ENCODE measurements at regions of chrX and their contacts with region 1.

Region 1: GRCh38 chrX:106611679-106612392 is at the start of gene RADX:
- DNase-seq: peak; percentile 58
- ATAC-seq: peak; percentile 99
- H3K4me3 ChIP-seq: peak within 1 kb of the TSS; percentile 60 to 73 (median 72)
- H3K27ac ChIP-seq: no peak within 1 kb of the TSS
- H3K4me1 ChIP-seq: peaks cover 10% of the 10 kb centered on the region
- H3K27me3 ChIP-seq: no peaks in the 10 kb centered on the region
- CTCF ChIP-seq: no peak
- EP300 ChIP-seq: no peak
- POLR2A ChIP-seq: 0 out of 4 replicates have a peak, but pooled peaks of 1 of the 2 experiments have one; percentile 23
- RAD21 ChIP-seq: no peak
- total RNA-seq, gene RADX: 2.6 and 2.7 TPM in 2 replicates

Region 2: GRCh38 chrX:106588801-106589200 is 23.0 kb before region 1 on chrX:
- CTCF ChIA-PET with region 1: no interaction called
- POLR2A ChIA-PET with region 1: no interaction called
- in situ Hi-C with region 1: no loop called
- intact Hi-C with region 1: no loop called
- DNase-seq: no peak
- ATAC-seq: no peak
- H3K4me3 ChIP-seq: no peak overlapping the region
- H3K27ac ChIP-seq: no peak overlapping the region
- H3K4me1 ChIP-seq: no peaks in the 10 kb centered on the region
- H3K27me3 ChIP-seq: no peaks in the 10 kb centered on the region
- CTCF ChIP-seq: no peak
- EP300 ChIP-seq: no peak
- POLR2A ChIP-seq: no peak
- RAD21 ChIP-seq: no peak

Region 3: GRCh38 chrX:106649523-106650428 is 37.9 kb after region 1 on chrX:
- CTCF ChIA-PET with region 1: no interaction called
- POLR2A ChIA-PET with region 1: no interaction called
- in situ Hi-C with region 1: no loop called
- intact Hi-C with region 1: no loop called
- DNase-seq: no peak
- ATAC-seq: no peak
- H3K4me3 ChIP-seq: no peak overlapping the region
- H3K27ac ChIP-seq: no peak overlapping the region
- H3K4me1 ChIP-seq: 0 out of 2 replicates have a peak, but pooled peaks cover 11% of the 10 kb centered on the region
- H3K27me3 ChIP-seq: no peaks in the 10 kb centered on the region
- CTCF ChIP-seq: no peak
- EP300 ChIP-seq: no peak
- POLR2A ChIP-seq: no peak
- RAD21 ChIP-seq: no peak

Region 4: DNA sequence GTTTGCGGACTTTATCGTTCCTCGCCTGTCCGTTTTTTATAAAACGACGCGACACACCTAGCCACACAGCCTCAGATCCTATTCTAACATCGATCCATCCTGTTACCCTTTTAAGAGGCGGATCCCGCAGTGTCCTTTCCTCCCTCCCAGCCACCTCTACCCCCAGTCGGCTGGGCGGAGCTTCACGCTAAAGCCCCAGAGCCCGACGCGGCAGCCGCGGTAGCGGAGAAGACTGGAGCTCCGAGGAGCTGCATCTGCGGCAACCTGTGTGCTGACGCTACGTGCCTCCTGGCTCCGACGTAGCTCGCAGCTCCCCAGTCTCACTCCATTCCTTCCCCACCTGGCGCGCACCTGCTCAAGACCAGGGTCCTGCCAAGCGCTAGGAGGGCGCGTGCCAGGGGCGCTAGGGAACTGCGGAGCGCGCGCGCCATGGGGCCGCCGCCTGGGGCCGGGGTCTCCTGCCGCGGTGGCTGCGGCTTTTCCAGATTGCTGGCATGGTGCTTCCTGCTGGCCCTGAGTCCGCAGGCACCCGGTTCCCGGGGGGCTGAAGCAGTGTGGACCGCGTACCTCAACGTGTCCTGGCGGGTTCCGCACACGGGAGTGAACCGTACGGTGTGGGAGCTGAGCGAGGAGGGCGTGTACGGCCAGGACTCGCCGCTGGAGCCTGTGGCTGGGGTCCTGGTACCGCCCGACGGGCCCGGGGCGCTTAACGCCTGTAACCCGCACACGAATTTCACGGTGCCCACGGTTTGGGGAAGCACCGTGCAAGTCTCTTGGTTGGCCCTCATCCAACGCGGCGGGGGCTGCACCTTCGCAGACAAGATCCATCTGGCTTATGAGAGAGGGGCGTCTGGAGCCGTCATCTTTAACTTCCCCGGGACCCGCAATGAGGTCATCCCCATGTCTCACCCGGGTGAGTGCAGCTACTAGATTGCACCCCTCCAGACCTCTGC is 114.9 kb after region 1 on chrX and contains the start of gene RNF128:
- CTCF ChIA-PET with region 1: no interaction called
- POLR2A ChIA-PET with region 1: no interaction called
- in situ Hi-C with region 1: no loop called
- intact Hi-C with region 1: loop called (anchors 10 kb)
- DNase-seq: peak; percentile 66
- ATAC-seq: peak; percentile 95
- H3K4me3 ChIP-seq: peak within 1 kb of the TSS; percentile 82 to 88 (median 85)
- H3K27ac ChIP-seq: peak within 1 kb of the TSS; percentile 77
- H3K4me1 ChIP-seq: peaks cover 8% of the 10 kb centered on the region
- H3K27me3 ChIP-seq: no peaks in the 10 kb centered on the region; a peak in 1 of 5 replicates
- CTCF ChIP-seq: no peak
- EP300 ChIP-seq: no peak
- POLR2A ChIP-seq: peak; percentile 84 to 93
- RAD21 ChIP-seq: no peak
- total RNA-seq, gene RNF128: 9.7 and 18.5 TPM in 2 replicates

Region 5: DNA sequence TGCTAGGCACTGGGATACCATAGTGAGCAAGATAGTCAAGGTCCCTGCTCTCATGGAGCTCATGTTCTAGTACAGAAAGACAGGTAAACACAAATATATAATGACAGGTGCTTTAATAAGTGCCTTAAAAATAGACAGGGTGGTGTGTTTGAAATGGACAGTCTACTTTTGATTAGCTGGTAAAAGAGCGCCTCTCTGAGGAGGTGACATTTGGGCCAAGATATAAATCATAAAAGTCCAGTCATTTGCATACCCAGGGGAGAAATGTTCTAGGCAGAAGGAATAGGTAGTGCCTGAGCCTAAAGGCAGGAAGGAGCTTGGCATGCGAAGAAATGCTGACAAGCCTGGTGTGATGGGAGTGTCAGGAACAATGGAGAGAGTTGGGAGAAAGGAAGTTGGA is 678.2 kb after region 1 on chrX:
- CTCF ChIA-PET with region 1: no interaction called
- POLR2A ChIA-PET with region 1: no interaction called
- in situ Hi-C with region 1: no loop called
- intact Hi-C with region 1: no loop called
- DNase-seq: no peak
- ATAC-seq: no peak
- H3K4me3 ChIP-seq: no peak overlapping the region
- H3K27ac ChIP-seq: no peak overlapping the region
- H3K4me1 ChIP-seq: no peaks in the 10 kb centered on the region
- H3K27me3 ChIP-seq: no peaks in the 10 kb centered on the region
- CTCF ChIP-seq: no peak
- EP300 ChIP-seq: no peak
- POLR2A ChIP-seq: no peak
- RAD21 ChIP-seq: no peak

Measured in HepG2 (cell line).